ENCODE measurements at regions of chr19 and their contacts with region 1.

Region 1: GRCh38 chr19:13727798-13728197 is 36.5 kb upstream of the MRI1 start:
- DNase-seq: no peak
- CTCF ChIP-seq: no peak

Region 2: GRCh38 chr19:13441810-13442512 is 285.8 kb before region 1 on chr19:
- in situ Hi-C with region 1: no loop called
- DNase-seq: peak; percentile 52
- CTCF ChIP-seq: no peak

Region 3: DNA sequence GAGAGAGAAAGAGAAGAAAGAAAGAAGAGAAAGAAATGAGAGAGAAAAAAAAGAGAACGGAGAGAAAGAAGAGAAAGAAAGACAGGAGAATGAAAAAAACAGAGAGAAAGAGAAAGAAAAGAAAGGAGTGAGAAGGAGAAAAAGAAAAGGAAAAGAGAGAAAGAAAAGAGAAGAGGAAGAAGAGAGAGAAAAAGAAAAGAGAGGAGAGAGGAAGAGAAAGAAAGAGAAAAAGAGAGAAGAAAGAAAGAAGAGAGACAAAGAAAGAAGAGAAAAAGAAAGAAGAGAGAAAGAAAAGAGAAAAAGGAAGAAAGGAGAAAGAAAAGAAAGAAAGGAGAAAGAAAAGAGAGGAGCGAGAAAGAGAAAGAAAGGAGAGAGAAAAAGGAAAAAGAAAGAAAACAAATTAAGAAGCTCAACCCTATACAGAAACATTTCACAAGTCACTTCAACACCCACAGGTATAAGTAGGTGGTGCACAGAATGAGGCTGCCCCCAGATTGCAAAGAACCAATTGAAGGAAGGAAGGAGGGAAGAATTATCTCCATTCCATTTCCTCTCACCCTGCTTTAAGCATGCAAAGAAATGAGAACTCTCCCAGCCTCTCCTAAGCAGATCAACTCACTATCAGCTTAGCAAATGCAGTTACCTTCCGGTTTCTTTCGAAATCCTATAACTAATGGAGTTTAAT is 122.8 kb before region 1 on chr19:
- in situ Hi-C with region 1: loop called (anchors 10 kb)
- DNase-seq: no peak
- CTCF ChIP-seq: no peak

Region 4: GRCh38 chr19:14006243-14006765 is 278.5 kb after region 1 on chr19 and contains the start of gene RFX1:
- in situ Hi-C with region 1: no loop called
- DNase-seq: peak; percentile 91
- CTCF ChIP-seq: no peak